Naive thymus-derived CD4-positive, alpha-beta T cell (primary cell): ENCODE measurements at regions of chr12 and their contacts with region 1.

Region 1: DNA sequence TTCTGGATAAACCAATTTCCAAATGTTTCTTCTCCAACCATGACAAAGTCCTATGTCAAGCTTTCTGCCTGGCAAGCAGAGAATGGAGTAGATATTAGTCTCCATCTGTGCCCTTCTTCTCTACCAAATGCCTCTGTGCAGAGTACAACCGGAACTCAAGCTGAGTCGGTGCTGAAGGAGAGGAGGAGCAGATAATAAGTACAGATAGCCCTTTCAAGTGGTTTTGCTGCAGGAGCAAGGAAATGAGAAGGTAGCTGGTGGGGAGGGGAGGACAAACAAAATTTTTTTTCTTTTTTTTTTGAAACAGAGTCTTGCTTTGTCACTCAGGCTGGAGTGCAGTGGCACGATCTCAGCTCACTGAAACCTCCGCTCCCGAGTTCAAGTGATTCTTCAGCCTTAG is 14.2 kb upstream of the HELB start:
- DNase-seq: peak in 8 of 9 donors; percentile 48 to 93 (median 89)
- ATAC-seq: peak; percentile 96
- H3K4me3 ChIP-seq: peak overlapping the region; percentile 47
- H3K4me3 Mint-ChIP-seq: peak overlapping the region; percentile 57 to 82 (median 68)
- H3K27ac ChIP-seq: peak overlapping the region; percentile 4
- H3K27ac Mint-ChIP-seq: peak overlapping the region; percentile 70 to 96 (median 85)
- H3K4me1 ChIP-seq: peaks cover 57 to 80% of the 10 kb centered on the region in 2 donors
- H3K4me1 Mint-ChIP-seq: peaks cover 61 to 100% (median 84%) of the 10 kb centered on the region in 7 donors
- H3K27me3 ChIP-seq: no peaks in the 10 kb centered on the region
- H3K27me3 Mint-ChIP-seq: no peaks in the 10 kb centered on the region

Region 2: GRCh38 chr12:66025477-66025876 is 262.6 kb before region 1 on chr12:
- CTCF ChIA-PET with region 1: no interaction called
- POLR2A ChIA-PET with region 1: no interaction called
- intact Hi-C with region 1: no loop called
- DNase-seq: no peak
- ATAC-seq: no peak
- H3K4me3 ChIP-seq: no peak overlapping the region
- H3K4me3 Mint-ChIP-seq: no peak overlapping the region
- H3K27ac ChIP-seq: no peak overlapping the region
- H3K27ac Mint-ChIP-seq: no peak overlapping the region
- H3K4me1 ChIP-seq: no peaks in the 10 kb centered on the region
- H3K4me1 Mint-ChIP-seq: no peaks in the 10 kb centered on the region
- H3K27me3 ChIP-seq: no peaks in the 10 kb centered on the region
- H3K27me3 Mint-ChIP-seq: peaks cover 15 to 42% (median 30%) of the 10 kb centered on the region in 5 donors

Region 3: DNA sequence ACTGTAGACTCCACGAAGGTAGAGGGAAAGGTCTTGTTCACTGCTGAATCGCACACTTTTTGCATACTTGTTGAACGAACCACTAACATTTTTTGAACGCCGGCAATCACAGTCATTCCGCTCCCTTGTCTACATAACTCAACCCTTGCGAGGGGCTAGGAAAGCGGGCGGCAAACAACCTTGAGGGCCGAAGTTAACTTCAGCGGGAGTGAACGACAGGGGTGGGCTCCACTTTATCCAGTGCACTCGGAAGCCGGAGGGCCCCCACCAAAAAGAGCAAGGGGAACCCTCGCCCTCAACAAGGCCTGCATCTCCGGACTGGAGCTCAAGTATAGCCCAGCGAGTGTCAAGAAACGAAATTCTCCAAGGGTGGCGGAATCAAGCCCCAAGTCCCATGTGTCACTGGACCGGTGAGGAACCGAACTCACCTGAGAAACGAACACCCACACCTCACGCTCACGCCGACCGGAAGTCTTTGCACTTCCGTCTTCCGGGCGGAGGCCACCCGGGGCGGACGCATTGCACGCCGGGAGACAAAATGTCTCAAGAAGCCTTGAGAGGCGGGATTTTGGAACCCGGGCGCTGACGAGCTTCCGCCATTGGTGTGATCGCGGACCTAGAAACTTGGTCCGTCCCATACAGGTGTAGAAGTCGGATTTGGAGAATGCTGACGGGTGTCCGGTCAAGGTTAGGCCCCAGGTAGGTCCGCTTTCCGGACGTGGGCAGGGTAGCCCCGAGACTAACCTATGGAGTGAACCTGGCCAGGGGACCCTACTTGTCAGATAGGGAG is 157.6 kb before region 1 on chr12 and contains the start of gene LLPH:
- CTCF ChIA-PET with region 1: interaction called, 4 read pairs
- POLR2A ChIA-PET with region 1: interaction called, 3 read pairs
- intact Hi-C with region 1: loop called in 1 of 2 experiments (anchors 1 kb)
- DNase-seq: peak; percentile 72 to 88 (median 86)
- ATAC-seq: peak; percentile 97
- H3K4me3 ChIP-seq: peak within 1 kb of the TSS; percentile 99
- H3K4me3 Mint-ChIP-seq: peak within 1 kb of the TSS; percentile 92 to 98 (median 97)
- H3K27ac ChIP-seq: peak within 1 kb of the TSS; percentile 87
- H3K27ac Mint-ChIP-seq: peak within 1 kb of the TSS; percentile 95 to 99 (median 97)
- H3K4me1 ChIP-seq: peaks cover 19 to 23% of the 10 kb centered on the region in 2 donors
- H3K4me1 Mint-ChIP-seq: peaks cover 37 to 76% (median 63%) of the 10 kb centered on the region in 7 donors
- H3K27me3 ChIP-seq: no peaks in the 10 kb centered on the region
- H3K27me3 Mint-ChIP-seq: no peaks in the 10 kb centered on the region
- total RNA-seq, gene LLPH: 14.7 to 29.1 (median 28.4) TPM

Region 4: DNA sequence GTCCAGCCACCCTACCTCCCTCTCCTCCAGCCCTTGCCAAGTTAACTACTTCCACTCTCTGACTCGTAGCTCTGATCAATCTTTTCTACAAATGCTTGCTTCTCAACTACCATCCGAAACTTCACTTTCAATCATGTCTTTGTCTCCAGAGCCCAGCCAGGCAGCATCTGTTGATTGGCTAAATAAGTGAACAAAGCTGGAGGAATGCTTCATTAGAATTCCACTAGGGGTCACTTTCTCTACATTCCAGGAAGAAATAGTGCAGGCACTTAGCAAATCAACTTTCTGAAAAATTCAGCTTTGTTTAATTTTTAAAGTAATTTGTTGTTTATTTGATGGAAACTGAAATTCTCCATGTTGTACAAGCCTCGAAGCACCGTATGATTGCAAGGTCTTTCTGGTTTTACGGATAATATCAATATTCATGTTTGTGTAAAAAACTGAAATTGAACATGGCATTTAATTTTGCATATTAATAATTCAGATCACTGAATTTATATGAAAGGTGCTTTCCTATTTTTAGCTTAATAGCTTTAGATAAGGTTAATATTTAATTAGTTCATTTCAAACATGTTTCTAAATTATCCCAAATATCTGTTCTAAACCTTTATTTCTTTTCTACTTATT is 18.3 kb before region 1 on chr12:
- CTCF ChIA-PET with region 1: interaction called, 8 read pairs
- POLR2A ChIA-PET with region 1: interaction called, 4 read pairs
- intact Hi-C with region 1: loop called (anchors 1 kb)
- DNase-seq: peak in 7 of 9 donors; percentile 20 to 62 (median 52)
- ATAC-seq: peak; percentile 72
- H3K4me3 ChIP-seq: no peak overlapping the region
- H3K4me3 Mint-ChIP-seq: no peak overlapping the region
- H3K27ac ChIP-seq: no peak overlapping the region
- H3K27ac Mint-ChIP-seq: peak overlapping the region in 1 of 9 donors; percentile 55
- H3K4me1 ChIP-seq: peaks cover 0 to 13% of the 10 kb centered on the region in 2 donors
- H3K4me1 Mint-ChIP-seq: peaks cover 6 to 22% (median 9%) of the 10 kb centered on the region in 7 donors
- H3K27me3 ChIP-seq: no peaks in the 10 kb centered on the region
- H3K27me3 Mint-ChIP-seq: no peaks in the 10 kb centered on the region

Region 5: DNA sequence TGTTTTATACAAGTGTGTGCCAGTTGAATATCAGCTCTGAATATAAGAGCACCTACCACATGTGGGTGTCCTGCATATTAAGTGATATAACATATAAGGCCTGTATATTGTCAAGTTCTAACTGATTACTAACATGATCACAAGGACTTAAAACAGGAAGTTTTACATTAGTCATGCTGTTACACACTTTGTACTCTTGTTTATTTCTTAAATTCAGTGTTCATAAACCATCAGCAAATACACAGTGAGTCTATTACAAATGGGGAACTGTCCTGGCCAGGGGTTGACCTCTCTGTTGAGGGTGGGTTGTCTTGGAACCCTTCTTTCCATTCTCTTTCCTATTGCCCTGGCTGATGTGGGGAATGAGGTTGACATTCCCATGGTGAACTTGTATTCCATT is 33.3 kb after region 1 on chr12:
- CTCF ChIA-PET with region 1: no interaction called
- POLR2A ChIA-PET with region 1: no interaction called
- intact Hi-C with region 1: loop called in 1 of 2 experiments (anchors 5 kb)
- DNase-seq: no peak
- ATAC-seq: peak; percentile 76
- H3K4me3 ChIP-seq: no peak overlapping the region
- H3K4me3 Mint-ChIP-seq: no peak overlapping the region
- H3K27ac ChIP-seq: no peak overlapping the region
- H3K27ac Mint-ChIP-seq: peak overlapping the region in 6 of 9 donors; percentile 1 to 71 (median 10)
- H3K4me1 ChIP-seq: peaks cover 0 to 4% of the 10 kb centered on the region in 2 donors
- H3K4me1 Mint-ChIP-seq: peaks cover 18 to 80% (median 69%) of the 10 kb centered on the region in 7 donors
- H3K27me3 ChIP-seq: no peaks in the 10 kb centered on the region
- H3K27me3 Mint-ChIP-seq: no peaks in the 10 kb centered on the region